HepG2 (cell line): ENCODE measurements at regions of chr2 and their contacts with region 1.

Region 1: GRCh38 chr2:179410552-179411356 is 146.1 kb upstream of the SESTD1 start:
- DNase-seq: peak; percentile 77
- ATAC-seq: peak; percentile 96
- H3K4me3 ChIP-seq: peak overlapping the region in 1 of 3 experiments; percentile 13; a peak in 1 of 6 replicates
- H3K27ac ChIP-seq: no peak overlapping the region
- H3K4me1 ChIP-seq: peaks cover 9% of the 10 kb centered on the region; the same call in 1 of the 2 replicates
- H3K27me3 ChIP-seq: no peaks in the 10 kb centered on the region
- CTCF ChIP-seq: peak; percentile 87
- EP300 ChIP-seq: no peak
- POLR2A ChIP-seq: no peak
- RAD21 ChIP-seq: peak; percentile 74

Region 2: GRCh38 chr2:179936654-179937053 is 525.9 kb after region 1 on chr2:
- CTCF ChIA-PET with region 1: no interaction called
- POLR2A ChIA-PET with region 1: no interaction called
- in situ Hi-C with region 1: no loop called
- intact Hi-C with region 1: loop called (anchors 1 kb)
- DNase-seq: peak; percentile 74
- ATAC-seq: peak; percentile 91
- H3K4me3 ChIP-seq: no peak overlapping the region
- H3K27ac ChIP-seq: no peak overlapping the region
- H3K4me1 ChIP-seq: peaks cover 4% of the 10 kb centered on the region
- H3K27me3 ChIP-seq: no peaks in the 10 kb centered on the region
- CTCF ChIP-seq: peak; percentile 71
- EP300 ChIP-seq: no peak
- POLR2A ChIP-seq: no peak
- RAD21 ChIP-seq: peak; percentile 35; the same call in 1 of the 2 replicates